Astrocyte of the cerebellum (primary cell): ENCODE measurements at regions of chr3 and their contacts with region 1.

Region 1: GRCh38 chr3:159989973-159990846 is 1.6 kb downstream of the IL12A start:
- DNase-seq: no peak
- H3K4me3 ChIP-seq: no peak overlapping the region
- CTCF ChIP-seq: peak; percentile 31

Region 2: GRCh38 chr3:159892171-159892795 is 97.9 kb before region 1 on chr3:
- in situ Hi-C with region 1: loop called (anchors 5 kb)
- DNase-seq: no peak
- H3K4me3 ChIP-seq: no peak overlapping the region
- CTCF ChIP-seq: no peak